PC-9 (cell line): ENCODE measurements at regions of chr5 and their contacts with region 1.

Region 1: DNA sequence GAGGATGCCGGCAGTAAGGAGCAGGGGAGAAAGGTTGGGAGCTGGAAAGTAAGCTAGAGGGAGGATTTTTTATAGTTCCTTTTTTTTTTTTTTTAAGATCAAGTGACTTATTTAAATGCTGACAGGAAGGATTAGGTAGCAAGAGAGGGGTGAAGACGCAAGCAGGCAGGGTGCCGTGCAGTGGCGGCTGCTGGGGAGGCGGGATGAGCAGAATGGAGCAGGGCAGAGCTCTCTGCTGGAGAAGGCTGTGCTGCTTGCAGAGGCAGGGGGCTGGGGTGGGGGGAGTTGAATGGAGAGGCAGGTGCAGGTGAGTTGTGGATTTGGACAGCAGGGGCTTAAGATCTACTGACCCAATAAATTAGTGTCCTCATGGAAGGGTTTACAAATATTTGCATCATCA is 35.4 kb upstream of the SMIM32 start:
- DNase-seq: no peak
- H3K4me3 ChIP-seq: no peak overlapping the region
- H3K27ac ChIP-seq: no peak overlapping the region
- H3K4me1 ChIP-seq: no peaks in the 10 kb centered on the region
- H3K27me3 ChIP-seq: 0 out of 2 replicates have a peak, but pooled peaks cover 9% of the 10 kb centered on the region
- CTCF ChIP-seq: no peak

Region 2: GRCh38 chr5:135398853-135399523 is 829.4 kb before region 1 on chr5 and contains the start of gene MACROH2A1:
- CTCF ChIA-PET with region 1: no interaction called
- POLR2A ChIA-PET with region 1: no interaction called
- intact Hi-C with region 1: no loop called
- DNase-seq: peak; percentile 64 to 78
- H3K4me3 ChIP-seq: peak within 1 kb of the TSS; percentile 96
- H3K27ac ChIP-seq: peak within 1 kb of the TSS; percentile 69
- H3K4me1 ChIP-seq: peaks cover 21% of the 10 kb centered on the region
- H3K27me3 ChIP-seq: no peaks in the 10 kb centered on the region
- CTCF ChIP-seq: no peak
- total RNA-seq, gene MACROH2A1: 223 and 294 TPM in 2 replicates

Region 3: GRCh38 chr5:136087961-136088871 is 140.1 kb before region 1 on chr5:
- CTCF ChIA-PET with region 1: no interaction called
- POLR2A ChIA-PET with region 1: interaction called, 15 read pairs
- intact Hi-C with region 1: no loop called
- DNase-seq: peak in 1 of 2 experiments; percentile 16
- H3K4me3 ChIP-seq: no peak overlapping the region
- H3K27ac ChIP-seq: no peak overlapping the region
- H3K4me1 ChIP-seq: no peaks in the 10 kb centered on the region
- H3K27me3 ChIP-seq: no peaks in the 10 kb centered on the region
- CTCF ChIP-seq: no peak